H1 (cell line): ENCODE measurements at regions of chr22 and their contacts with region 1.

Region 1: GRCh38 chr22:37316875-37317371 is 34.6 kb downstream of the CYTH4 start:
- DNase-seq: peak; percentile 34 to 85
- H3K4me3 ChIP-seq: no peak overlapping the region
- H3K27ac ChIP-seq: no peak overlapping the region
- H3K4me1 ChIP-seq: peaks cover 0 to 6% (median 0%) of the 10 kb centered on the region in 4 experiments; a peak in 2 of 7 replicates
- H3K27me3 ChIP-seq: no peaks in the 10 kb centered on the region
- CTCF ChIP-seq: peak; percentile 95 to 99 (median 96)
- EP300 ChIP-seq: no peak
- POLR2A ChIP-seq: no peak
- RAD21 ChIP-seq: peak; percentile 98 to 99

Region 2: DNA sequence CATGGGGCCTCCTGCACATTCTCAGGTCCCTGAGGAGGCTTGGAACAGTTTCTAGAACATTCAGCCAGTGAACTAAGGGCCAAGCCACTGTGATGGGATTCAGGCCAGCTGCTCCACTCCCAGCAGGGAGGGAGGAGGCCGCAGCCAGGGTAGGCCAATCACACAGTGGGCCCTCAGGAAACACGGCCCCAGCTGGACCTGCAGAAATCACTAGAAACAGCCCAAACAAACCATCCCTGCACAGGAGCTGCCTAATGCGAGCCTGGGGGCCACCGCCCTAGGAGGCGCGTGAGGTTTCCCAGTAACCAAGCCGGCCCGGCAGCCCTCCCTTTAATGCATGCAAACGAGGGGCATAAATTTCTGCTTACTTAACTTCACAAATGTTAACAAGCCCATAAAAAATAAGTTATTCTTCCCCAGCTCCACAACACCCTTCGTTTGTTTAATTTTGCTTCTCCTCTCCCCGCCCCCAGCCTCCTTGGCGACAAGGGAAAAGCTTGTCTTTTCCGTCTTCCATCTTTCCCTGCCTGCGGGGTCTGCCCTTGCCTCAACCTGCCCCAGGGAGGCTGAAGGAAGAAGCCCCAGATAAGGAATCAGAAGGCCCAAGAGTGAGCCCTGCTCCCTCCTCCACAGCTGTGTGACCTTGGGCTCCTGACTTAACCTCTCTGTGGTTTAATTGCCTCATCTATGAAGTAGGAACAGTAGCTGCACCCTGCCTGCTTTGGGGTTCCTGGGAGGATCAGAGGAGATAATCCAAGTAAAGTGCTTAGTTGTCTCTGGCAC is 84.7 kb after region 1 on chr22:
- CTCF ChIA-PET with region 1: interaction called, 60 read pairs
- POLR2A ChIA-PET with region 1: no interaction called
- DNase-seq: no peak
- H3K4me3 ChIP-seq: no peak overlapping the region
- H3K27ac ChIP-seq: no peak overlapping the region
- H3K4me1 ChIP-seq: peaks cover 0 to 16% (median 8%) of the 10 kb centered on the region in 4 experiments; a peak in 4 of 7 replicates
- H3K27me3 ChIP-seq: no peaks in the 10 kb centered on the region
- CTCF ChIP-seq: no peak
- EP300 ChIP-seq: no peak
- POLR2A ChIP-seq: no peak
- RAD21 ChIP-seq: no peak

Region 3: DNA sequence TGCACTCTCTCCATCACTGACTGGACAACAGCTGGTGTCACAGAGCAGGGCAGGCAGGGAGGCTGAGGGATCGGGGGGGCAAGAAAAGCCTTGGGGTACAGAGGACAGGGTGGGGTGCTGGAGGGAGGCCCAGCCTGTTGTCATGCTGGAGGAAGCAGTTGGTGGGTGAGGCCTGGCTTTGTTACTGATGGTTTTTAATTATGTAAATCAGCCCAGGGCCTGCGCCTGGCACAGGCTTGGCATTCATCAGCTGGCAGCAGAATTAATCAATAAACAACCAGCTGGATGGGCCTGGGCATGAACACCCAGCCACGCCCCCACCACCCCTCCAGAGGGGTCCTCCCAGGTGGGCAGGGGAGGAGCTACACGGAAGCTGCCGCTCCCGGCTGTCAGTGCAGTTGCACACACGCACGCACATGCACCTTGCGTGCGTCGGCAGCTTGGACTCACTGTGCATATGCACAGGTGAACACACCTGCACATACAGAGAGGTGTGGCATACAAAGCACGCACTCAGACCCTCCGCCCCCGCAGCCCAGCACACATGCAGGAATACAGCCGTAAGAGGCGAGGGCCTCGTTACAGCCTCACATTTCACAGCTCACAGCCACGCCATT is 131.7 kb after region 1 on chr22:
- CTCF ChIA-PET with region 1: interaction called, 119 read pairs
- POLR2A ChIA-PET with region 1: no interaction called
- DNase-seq: no peak
- H3K4me3 ChIP-seq: no peak overlapping the region
- H3K27ac ChIP-seq: no peak overlapping the region
- H3K4me1 ChIP-seq: peaks cover 0 to 2% (median 0%) of the 10 kb centered on the region in 4 experiments; a peak in 1 of 7 replicates
- H3K27me3 ChIP-seq: peaks cover 0 to 2% (median 0%) of the 10 kb centered on the region in 4 experiments; a peak in 1 of 7 replicates
- CTCF ChIP-seq: no peak
- EP300 ChIP-seq: no peak
- POLR2A ChIP-seq: no peak
- RAD21 ChIP-seq: no peak

Region 4: DNA sequence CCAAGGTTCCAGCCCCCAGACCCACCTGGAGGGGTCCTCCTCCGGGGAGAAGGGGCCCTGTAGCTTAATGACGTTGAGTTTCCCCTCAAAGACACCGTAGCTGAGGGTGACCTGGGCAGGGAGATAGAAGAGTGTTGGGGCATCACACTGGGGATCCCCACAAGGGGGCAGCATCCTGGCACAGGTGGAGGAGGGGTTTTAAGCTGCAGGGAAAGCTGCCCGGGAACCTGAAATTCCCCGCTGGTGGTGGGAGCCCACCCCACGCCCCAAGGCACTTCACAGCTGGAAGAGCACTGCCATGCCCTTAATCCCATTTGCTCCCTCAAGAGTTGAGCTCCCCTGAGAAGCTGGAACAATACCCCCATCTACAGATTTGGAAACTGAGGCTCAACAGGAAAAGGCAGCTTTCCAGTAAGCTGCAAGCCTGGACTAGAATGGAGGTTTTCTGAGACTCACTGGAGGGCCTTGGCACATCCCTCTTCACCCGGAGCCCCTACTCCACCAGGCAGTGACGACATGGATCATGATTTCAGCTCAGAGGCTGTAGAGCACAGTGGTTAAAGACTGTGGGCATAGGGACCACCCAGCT is 155.6 kb after region 1 on chr22:
- CTCF ChIA-PET with region 1: interaction called, 10 read pairs
- POLR2A ChIA-PET with region 1: no interaction called
- DNase-seq: peak in 1 of 2 experiments; percentile 83
- H3K4me3 ChIP-seq: no peak overlapping the region; a peak in 1 of 8 replicates
- H3K27ac ChIP-seq: no peak overlapping the region
- H3K4me1 ChIP-seq: no peaks in the 10 kb centered on the region; a peak in 3 of 7 replicates
- H3K27me3 ChIP-seq: no peaks in the 10 kb centered on the region; a peak in 1 of 7 replicates
- CTCF ChIP-seq: peak; percentile 85 to 92 (median 89)
- EP300 ChIP-seq: no peak
- POLR2A ChIP-seq: no peak
- RAD21 ChIP-seq: peak; percentile 66 to 71